ENCODE measurements at regions of chr9 and their contacts with region 1.

Region 1: DNA sequence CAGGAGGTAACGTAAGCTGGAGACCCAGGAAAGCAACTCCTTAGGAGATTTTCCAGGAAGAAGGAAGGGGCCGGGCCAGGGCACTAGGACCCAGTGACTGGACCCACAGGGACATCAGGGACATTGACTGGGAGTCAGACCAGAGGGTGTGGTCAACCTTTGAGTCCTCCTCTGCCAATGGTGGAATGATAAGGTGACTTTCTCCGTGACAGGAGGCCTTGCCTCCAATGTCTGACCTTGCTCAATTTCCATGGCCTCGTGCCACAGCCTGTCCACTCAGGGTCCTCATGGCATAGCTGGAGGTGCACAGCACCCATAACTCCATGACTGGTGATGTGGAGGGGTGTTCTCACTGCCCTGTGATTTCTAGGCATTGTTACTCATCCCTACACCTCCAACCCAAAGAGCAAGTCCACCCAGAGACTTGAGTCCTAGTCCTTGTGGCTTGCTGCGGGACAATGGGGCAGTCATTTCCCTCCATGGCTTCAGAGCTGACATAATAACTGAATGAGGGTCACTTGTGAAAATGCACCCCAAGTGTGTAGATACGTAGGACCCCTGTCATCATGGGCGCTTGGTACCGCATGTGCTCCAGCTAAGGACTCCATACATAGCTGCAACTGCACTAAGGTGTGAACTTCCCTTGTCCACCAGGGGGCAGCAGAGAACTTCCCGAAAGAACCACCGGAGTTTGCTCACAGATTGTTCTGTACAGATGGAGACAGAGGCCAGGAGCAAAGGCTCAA is 4.1 kb upstream of the AMBP start:
- DNase-seq: peak; percentile 94
- H3K4me3 Mint-ChIP-seq: no peak overlapping the region
- H3K27ac Mint-ChIP-seq: no peak overlapping the region
- H3K4me1 Mint-ChIP-seq: no peaks in the 10 kb centered on the region
- H3K27me3 Mint-ChIP-seq: no peaks in the 10 kb centered on the region

Region 2: DNA sequence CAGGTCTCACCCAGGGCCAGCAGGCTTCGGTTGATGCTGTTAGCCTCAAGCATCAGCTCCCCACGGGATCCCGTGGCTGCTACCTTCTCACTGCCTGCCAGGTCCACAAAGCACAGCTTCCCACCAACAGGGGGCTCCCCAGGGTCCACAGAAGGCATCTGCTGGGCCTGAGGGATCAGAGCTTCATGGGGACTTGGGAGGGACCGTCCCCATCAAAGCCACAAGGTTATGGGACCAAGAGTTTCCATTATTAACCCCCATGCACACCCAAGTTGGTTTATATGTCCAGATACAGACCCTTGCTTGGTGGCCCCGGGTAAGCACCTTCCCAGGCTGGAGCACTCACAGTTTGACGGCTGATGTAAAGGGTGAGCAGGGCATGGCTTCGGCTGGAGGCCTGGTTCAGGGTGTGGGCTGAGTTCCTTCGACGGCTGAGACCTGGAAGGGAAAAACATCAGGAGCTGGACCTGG is 13.9 kb after region 1 on chr9:
- CTCF ChIA-PET with region 1: interaction called, 10 read pairs
- intact Hi-C with region 1: no loop called
- DNase-seq: no peak
- H3K4me3 Mint-ChIP-seq: no peak overlapping the region
- H3K27ac Mint-ChIP-seq: no peak overlapping the region
- H3K4me1 Mint-ChIP-seq: peaks cover 6% of the 10 kb centered on the region
- H3K27me3 Mint-ChIP-seq: peaks cover 32% of the 10 kb centered on the region

Region 3: GRCh38 chr9:114108016-114108833 is 26.0 kb after region 1 on chr9:
- CTCF ChIA-PET with region 1: interaction called, 38 read pairs
- intact Hi-C with region 1: no loop called
- DNase-seq: peak; percentile 78
- H3K4me3 Mint-ChIP-seq: no peak overlapping the region
- H3K27ac Mint-ChIP-seq: no peak overlapping the region
- H3K4me1 Mint-ChIP-seq: no peaks in the 10 kb centered on the region
- H3K27me3 Mint-ChIP-seq: peaks cover 6% of the 10 kb centered on the region

Region 4: GRCh38 chr9:114155263-114155972 is 73.2 kb after region 1 on chr9 and contains the start of gene COL27A1:
- CTCF ChIA-PET with region 1: interaction called, 13 read pairs
- intact Hi-C with region 1: loop called (anchors 1 kb)
- DNase-seq: peak; percentile 87
- H3K4me3 Mint-ChIP-seq: peak within 1 kb of the TSS; percentile 81
- H3K27ac Mint-ChIP-seq: peak within 1 kb of the TSS; percentile 62
- H3K4me1 Mint-ChIP-seq: peaks cover 16% of the 10 kb centered on the region
- H3K27me3 Mint-ChIP-seq: peaks cover 27% of the 10 kb centered on the region
- total RNA-seq, gene COL27A1: 7.0 to 10.6 TPM

Region 5: DNA sequence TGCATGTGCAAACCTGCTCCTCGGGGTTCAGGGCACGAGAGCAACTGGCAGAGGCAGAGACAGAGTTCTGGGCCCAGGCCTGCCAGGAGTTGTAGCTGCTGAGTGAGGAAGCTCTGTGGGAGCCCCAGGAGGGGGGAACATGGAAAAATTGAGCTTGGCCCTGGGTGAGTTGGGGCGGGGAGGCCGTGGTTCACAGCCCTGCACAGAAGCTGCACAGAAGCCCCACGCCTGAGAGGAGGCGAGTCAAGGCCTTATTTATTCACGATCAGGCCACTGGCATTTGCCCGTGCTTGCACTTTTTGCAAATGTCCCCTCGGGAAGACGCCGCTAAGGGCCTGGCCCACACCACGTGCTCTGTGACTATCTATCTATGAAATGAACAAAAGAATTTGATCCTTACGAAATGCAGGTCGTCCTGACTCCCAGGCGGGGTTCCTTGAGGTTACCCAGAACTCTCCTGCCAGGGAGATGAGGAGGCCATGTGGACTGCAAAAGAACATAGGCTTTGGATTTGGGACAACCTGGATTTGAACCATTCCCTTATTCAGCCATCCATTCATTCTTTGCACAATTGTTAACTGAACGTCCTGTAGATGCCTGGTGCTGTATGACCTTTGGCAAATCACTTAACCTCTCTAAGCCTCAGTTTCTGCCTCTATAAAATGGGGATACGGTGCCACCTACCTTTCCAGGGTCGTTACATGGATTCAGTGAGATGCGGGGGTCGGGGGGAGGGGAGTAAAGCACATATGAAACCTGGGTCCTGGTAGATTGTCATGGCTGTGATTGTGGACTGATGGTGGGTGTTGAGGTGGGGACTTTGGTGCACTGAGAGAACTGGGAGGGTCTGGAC is 91.0 kb after region 1 on chr9:
- CTCF ChIA-PET with region 1: interaction called, 10 read pairs
- intact Hi-C with region 1: no loop called
- DNase-seq: no peak
- H3K4me3 Mint-ChIP-seq: no peak overlapping the region
- H3K27ac Mint-ChIP-seq: no peak overlapping the region
- H3K4me1 Mint-ChIP-seq: no peaks in the 10 kb centered on the region
- H3K27me3 Mint-ChIP-seq: no peaks in the 10 kb centered on the region

Measured in activated naive CD4-positive, alpha-beta T cell treated with anti-CD3 and anti-CD28 coated beads for 36 hours (primary cell).